Left colon (tissue), 2 donors: ENCODE measurements at regions of chr2 and their contacts with region 1.

Region 1: GRCh38 chr2:38581193-38582147 is 21.3 kb downstream of the HNRNPLL start:
- DNase-seq: peak; percentile 29 to 38
- ATAC-seq: peak; percentile 78

Region 2: DNA sequence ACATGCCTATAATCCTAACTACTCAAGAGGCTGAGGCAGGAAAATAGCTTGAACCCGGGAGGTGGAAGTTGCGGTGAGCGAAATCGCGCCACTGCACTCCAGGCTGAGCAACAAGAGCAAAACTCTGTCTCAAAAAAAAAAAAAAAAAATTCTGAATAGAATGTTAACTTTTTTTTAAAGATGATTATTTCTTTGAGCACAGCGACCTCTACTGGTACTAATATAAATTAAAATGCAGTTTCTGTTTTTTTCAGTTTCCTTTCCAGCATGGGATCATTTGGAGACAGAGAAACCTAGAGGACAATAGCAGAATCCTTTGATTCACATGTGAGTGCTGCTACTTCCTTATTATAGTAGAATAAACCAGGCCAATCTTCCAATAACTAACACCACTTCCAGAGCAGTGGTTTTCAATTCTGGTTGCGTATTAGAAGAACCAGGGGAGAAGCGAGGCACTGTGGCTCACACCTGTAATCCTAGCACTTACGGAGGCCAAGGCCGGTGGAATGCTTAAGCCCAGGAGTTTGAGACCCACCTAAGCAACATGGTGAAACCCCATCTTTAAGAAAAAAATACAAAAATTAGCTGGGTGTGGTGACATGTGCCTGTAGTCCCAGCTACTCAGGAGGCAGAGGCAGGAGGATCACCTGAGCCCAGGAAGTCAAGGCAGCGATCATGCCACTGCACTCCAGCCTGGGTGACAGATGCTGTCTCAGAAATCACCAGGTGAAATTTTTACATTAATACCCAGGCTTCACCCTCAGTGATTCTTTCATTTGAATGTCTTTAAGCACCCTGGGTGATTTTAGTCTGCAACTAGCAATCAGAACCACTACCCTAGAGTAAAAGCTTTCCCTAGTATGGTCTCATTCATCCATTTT is 159.6 kb after region 1 on chr2:
- intact Hi-C with region 1: loop called in 1 of 2 experiments (anchors 5 kb)
- DNase-seq: peak in 1 of 2 donors; percentile 35
- ATAC-seq: peak; percentile 73